Activated T-helper 2 cell treated with anti-CD3 and anti-CD28 coated beads, Interferon-gamma antibody, Interleukin-2, Interleukin-4, amounts not matched to agents 10 μg/mL and 5 μg/mL and 100 μg/mL, durations not matched to agents 14 hours and 24 hours and 36 hours (primary cell): ENCODE measurements at regions of chr18 and their contacts with region 1.

Region 1: GRCh38 chr18:12657684-12658425 is at the start of gene SPIRE1:
- DNase-seq: peak; percentile 34
- H3K4me3 Mint-ChIP-seq: peak within 1 kb of the TSS; percentile 85
- H3K27ac Mint-ChIP-seq: peak within 1 kb of the TSS; percentile 63
- H3K4me1 Mint-ChIP-seq: peaks cover 27% of the 10 kb centered on the region
- H3K27me3 Mint-ChIP-seq: peaks cover 6% of the 10 kb centered on the region
- total RNA-seq, gene SPIRE1: 16.5 and 19.0 TPM in 2 replicates

Region 2: GRCh38 chr18:12327510-12328178 is 330.2 kb before region 1 on chr18:
- intact Hi-C with region 1: loop called (anchors 5 kb)
- DNase-seq: peak; percentile 69
- H3K4me3 Mint-ChIP-seq: no peak overlapping the region
- H3K27ac Mint-ChIP-seq: peak overlapping the region; percentile 60
- H3K4me1 Mint-ChIP-seq: peaks cover 7% of the 10 kb centered on the region
- H3K27me3 Mint-ChIP-seq: no peaks in the 10 kb centered on the region

Region 3: DNA sequence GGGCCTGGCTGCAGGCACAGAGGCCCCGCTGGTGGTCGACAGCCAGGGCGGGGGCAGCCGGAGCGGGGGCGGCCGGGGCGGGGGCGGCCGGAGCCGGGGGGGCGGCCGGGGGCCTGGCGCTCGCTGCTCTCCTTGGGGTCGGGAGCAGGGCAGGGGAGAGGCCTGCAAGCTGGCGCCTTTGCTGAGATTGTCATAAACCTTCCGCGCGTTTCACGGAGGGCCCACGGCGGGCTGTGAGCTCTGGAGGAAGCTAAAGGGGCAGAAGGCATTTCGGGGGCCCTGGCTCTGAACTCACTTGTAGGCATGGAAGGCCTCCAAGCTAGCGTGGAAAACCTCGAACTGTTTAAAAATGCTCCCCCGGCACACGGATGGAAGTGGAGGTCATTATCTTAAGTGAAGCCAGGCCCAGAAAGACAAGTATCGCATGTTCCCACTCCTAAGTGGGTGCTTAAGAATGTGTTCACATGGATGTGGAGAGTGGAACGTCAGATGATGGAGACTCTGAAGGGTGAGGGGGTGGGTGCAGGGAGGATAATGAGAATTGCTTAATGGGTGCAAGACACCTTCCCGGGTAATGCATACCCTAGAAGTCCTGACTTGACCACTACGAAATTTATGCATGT is 249.5 kb before region 1 on chr18:
- intact Hi-C with region 1: loop called (anchors 5 kb)
- DNase-seq: no peak
- H3K4me3 Mint-ChIP-seq: peak overlapping the region; percentile 74
- H3K27ac Mint-ChIP-seq: peak overlapping the region; percentile 21
- H3K4me1 Mint-ChIP-seq: peaks cover 29% of the 10 kb centered on the region
- H3K27me3 Mint-ChIP-seq: peaks cover 32% of the 10 kb centered on the region

Region 4: GRCh38 chr18:12604445-12605007 is 53.3 kb before region 1 on chr18:
- intact Hi-C with region 1: loop called (anchors 5 kb)
- DNase-seq: no peak
- H3K4me3 Mint-ChIP-seq: no peak overlapping the region
- H3K27ac Mint-ChIP-seq: no peak overlapping the region
- H3K4me1 Mint-ChIP-seq: peaks cover 45% of the 10 kb centered on the region
- H3K27me3 Mint-ChIP-seq: no peaks in the 10 kb centered on the region

Region 5: GRCh38 chr18:12668041-12668440 is 10.2 kb after region 1 on chr18:
- intact Hi-C with region 1: no loop called
- DNase-seq: no peak
- H3K4me3 Mint-ChIP-seq: no peak overlapping the region
- H3K27ac Mint-ChIP-seq: no peak overlapping the region
- H3K4me1 Mint-ChIP-seq: peaks cover 3% of the 10 kb centered on the region
- H3K27me3 Mint-ChIP-seq: no peaks in the 10 kb centered on the region